ENCODE measurements at regions of chr5 and their contacts with region 1.

Region 1: DNA sequence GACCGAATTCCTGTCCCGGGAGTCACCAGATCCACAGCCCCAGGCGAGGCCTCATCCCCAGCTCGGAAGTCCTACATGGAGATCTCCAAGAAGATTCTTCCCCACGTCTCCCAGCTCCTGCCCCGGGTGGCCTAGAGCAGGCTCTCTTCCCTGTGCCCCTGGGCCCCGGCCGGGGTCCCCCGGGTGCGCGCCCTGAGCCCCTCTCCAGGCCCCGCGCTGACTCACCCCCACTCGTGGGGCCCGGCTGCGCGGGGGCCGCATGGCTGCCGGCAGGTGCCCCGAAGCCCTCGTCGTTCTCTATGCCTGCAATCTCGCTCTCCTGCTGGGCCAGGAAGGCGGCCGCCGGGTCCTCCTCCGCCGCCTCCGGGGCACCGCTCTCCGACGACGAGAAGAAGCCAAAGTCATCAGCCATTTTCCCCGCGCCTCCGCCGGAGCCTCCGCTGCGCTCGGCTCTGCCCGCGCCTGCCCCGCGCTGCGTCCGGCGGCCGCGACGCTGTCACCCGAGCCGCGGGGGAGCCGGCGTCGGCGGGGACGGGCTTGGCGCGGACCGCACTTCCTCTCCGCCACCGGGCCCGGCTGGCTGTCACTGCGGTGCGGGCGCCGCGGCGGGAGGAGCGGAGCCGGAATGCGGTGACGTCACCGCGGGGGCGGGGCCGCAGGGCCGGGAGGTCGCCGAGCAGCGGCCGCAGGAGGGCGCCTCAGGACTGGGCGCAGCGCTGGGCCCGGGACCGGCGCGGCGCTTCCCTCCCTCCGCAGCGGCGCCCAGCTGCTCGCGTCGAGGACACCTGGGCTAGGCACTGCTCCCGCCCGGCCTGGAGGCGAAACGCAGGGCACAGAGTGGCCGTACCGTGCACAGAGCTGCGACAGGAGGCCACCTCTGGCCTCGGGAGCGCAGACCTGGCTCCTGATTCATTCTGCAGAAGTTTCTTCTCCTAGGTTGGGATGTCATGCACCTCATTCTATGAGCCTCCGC is at the start of gene CLTB:
- DNase-seq: peak; percentile 90
- H3K4me3 Mint-ChIP-seq: peak within 1 kb of the TSS; percentile 74
- H3K27ac Mint-ChIP-seq: peak within 1 kb of the TSS; percentile 74
- H3K4me1 Mint-ChIP-seq: peaks cover 38% of the 10 kb centered on the region
- H3K27me3 Mint-ChIP-seq: no peaks in the 10 kb centered on the region
- total RNA-seq, gene CLTB: 51.1 to 53.9 TPM

Region 2: DNA sequence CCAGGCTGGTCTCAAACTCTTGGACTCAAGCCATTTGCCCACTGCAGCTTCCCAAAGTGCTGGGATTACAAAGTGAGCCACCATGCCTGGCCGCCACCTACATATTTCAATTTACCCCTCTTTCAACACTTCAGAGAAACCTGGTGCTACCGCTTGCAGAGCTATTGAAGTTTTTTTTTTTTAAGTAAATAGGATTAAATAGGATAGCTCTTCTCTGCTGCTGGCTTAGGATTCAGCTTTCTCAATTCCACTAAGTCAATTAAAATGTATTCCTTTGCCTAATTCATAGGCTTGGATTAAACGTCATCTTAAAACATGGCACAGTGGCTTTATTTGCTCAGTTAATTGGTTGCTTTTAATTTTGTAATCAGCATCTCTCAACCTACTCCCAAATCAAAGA is 95.7 kb before region 1 on chr5:
- CTCF ChIA-PET with region 1: no interaction called
- intact Hi-C with region 1: no loop called
- DNase-seq: no peak
- H3K4me3 Mint-ChIP-seq: no peak overlapping the region
- H3K27ac Mint-ChIP-seq: no peak overlapping the region
- H3K4me1 Mint-ChIP-seq: no peaks in the 10 kb centered on the region
- H3K27me3 Mint-ChIP-seq: no peaks in the 10 kb centered on the region

Region 3: GRCh38 chr5:176361437-176362232 is 54.6 kb before region 1 on chr5 and contains the start of gene KIAA1191:
- CTCF ChIA-PET with region 1: interaction called, 3 read pairs
- intact Hi-C with region 1: loop called (anchors 2 kb)
- DNase-seq: peak; percentile 97
- H3K4me3 Mint-ChIP-seq: peak within 1 kb of the TSS; percentile 99
- H3K27ac Mint-ChIP-seq: peak within 1 kb of the TSS; percentile 91
- H3K4me1 Mint-ChIP-seq: peaks cover 31% of the 10 kb centered on the region
- H3K27me3 Mint-ChIP-seq: no peaks in the 10 kb centered on the region
- total RNA-seq, gene KIAA1191: 33.5 to 33.7 TPM

Region 4: DNA sequence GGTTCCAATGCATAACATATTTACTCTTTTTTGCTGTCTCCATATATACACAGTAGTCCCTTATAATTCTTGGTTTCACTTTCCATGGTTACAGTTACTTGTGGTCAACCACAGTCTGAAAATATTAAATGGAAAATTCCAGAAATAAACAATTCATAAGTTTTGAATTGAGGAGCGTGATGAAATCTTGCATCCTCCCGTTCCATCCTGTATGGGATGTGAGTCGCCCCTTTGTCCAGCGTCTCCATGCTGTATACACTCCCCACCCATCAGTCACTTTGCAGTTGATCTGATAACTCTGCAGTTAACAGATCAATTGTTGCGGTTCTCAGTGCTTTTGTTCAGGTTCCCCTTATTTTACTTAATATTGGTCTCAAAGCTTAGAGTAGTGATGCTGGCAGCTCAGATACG is 20.4 kb after region 1 on chr5:
- CTCF ChIA-PET with region 1: interaction called, 3 read pairs
- intact Hi-C with region 1: loop called (anchors 1 kb)
- DNase-seq: peak; percentile 18
- H3K4me3 Mint-ChIP-seq: peak overlapping the region; percentile 37
- H3K27ac Mint-ChIP-seq: no peak overlapping the region
- H3K4me1 Mint-ChIP-seq: peaks cover 10% of the 10 kb centered on the region
- H3K27me3 Mint-ChIP-seq: no peaks in the 10 kb centered on the region

Region 5: GRCh38 chr5:176543428-176544173 is 127.4 kb after region 1 on chr5:
- CTCF ChIA-PET with region 1: interaction called, 21 read pairs
- intact Hi-C with region 1: loop called (anchors 1 kb)
- DNase-seq: peak; percentile 75
- H3K4me3 Mint-ChIP-seq: peak overlapping the region; percentile 88
- H3K27ac Mint-ChIP-seq: peak overlapping the region; percentile 93
- H3K4me1 Mint-ChIP-seq: peaks cover 63% of the 10 kb centered on the region
- H3K27me3 Mint-ChIP-seq: no peaks in the 10 kb centered on the region

Region 6: GRCh38 chr5:176596689-176597416 is 180.6 kb after region 1 on chr5:
- CTCF ChIA-PET with region 1: interaction called, 9 read pairs
- intact Hi-C with region 1: loop called (anchors 1 kb)
- DNase-seq: peak; percentile 70
- H3K4me3 Mint-ChIP-seq: peak overlapping the region; percentile 59
- H3K27ac Mint-ChIP-seq: no peak overlapping the region
- H3K4me1 Mint-ChIP-seq: peaks cover 9% of the 10 kb centered on the region
- H3K27me3 Mint-ChIP-seq: no peaks in the 10 kb centered on the region

Region 7: DNA sequence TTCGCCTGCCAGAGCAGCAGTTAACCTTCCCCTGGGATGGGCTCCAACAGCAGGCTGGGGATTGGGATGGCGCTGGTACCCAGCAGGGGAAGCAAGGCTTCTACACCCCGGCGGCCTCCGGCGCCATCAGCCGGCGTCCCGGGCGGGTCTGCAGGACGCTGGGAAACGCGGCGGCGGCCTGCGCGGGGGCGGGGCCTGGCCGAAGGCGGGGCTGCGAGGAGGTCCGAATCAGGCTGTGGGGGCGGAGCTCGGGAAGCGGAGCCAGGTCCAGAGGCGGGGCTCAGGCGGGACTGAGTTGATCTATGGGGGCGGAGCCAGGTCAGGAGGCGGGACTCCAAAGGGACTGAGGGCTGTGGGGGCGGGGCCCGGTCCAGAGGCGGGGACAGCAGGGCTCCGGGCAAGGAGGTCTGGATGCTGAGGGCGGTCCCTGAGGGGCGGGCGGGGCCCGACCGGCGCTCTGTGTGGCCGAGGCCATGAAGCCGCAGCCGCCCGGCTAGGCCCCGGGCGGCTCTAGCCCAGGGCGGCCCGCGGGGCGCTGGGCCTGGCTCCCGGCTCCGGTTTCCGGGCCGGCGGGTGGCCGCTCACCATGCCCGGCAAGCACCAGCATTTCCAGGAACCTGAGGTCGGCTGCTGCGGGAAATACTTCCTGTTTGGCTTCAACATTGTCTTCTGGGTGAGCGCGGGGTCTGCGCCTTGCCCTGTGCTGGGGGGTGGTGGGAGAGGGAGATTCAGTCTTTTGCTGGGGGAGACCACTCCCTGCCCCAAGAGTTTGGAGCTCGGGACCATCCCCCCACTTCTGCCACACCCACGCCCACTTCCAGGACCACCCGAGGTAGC is 231.0 kb after region 1 on chr5 and contains the start of gene TSPAN17:
- CTCF ChIA-PET with region 1: no interaction called
- intact Hi-C with region 1: loop called (anchors 1 kb)
- DNase-seq: peak; percentile 100
- H3K4me3 Mint-ChIP-seq: peak within 1 kb of the TSS; percentile 86
- H3K27ac Mint-ChIP-seq: peak within 1 kb of the TSS; percentile 86
- H3K4me1 Mint-ChIP-seq: peaks cover 44% of the 10 kb centered on the region
- H3K27me3 Mint-ChIP-seq: no peaks in the 10 kb centered on the region
- total RNA-seq, gene TSPAN17: 17.2 to 17.4 TPM